ENCODE measurements at regions of chr14 and their contacts with region 1.

Region 1: GRCh38 chr14:54312140-54312801 is 84.5 kb upstream of the CDKN3 start:
- DNase-seq: peak; percentile 91 to 97
- H3K4me3 ChIP-seq: no peak overlapping the region; the same call in 1 of the 2 replicates
- H3K27ac ChIP-seq: peak overlapping the region; percentile 75
- H3K4me1 ChIP-seq: peaks cover 35% of the 10 kb centered on the region
- H3K27me3 ChIP-seq: no peaks in the 10 kb centered on the region
- CTCF ChIP-seq: no peak

Region 2: GRCh38 chr14:54267172-54267571 is 45.1 kb before region 1 on chr14:
- CTCF ChIA-PET with region 1: no interaction called
- POLR2A ChIA-PET with region 1: interaction called, 8 read pairs
- intact Hi-C with region 1: loop called (anchors 5 kb)
- DNase-seq: peak in 1 of 2 experiments; percentile 44
- H3K4me3 ChIP-seq: no peak overlapping the region
- H3K27ac ChIP-seq: no peak overlapping the region
- H3K4me1 ChIP-seq: no peaks in the 10 kb centered on the region
- H3K27me3 ChIP-seq: no peaks in the 10 kb centered on the region
- CTCF ChIP-seq: no peak

Region 3: GRCh38 chr14:54337314-54337713 is 25.0 kb after region 1 on chr14:
- CTCF ChIA-PET with region 1: no interaction called
- POLR2A ChIA-PET with region 1: no interaction called
- intact Hi-C with region 1: no loop called
- DNase-seq: no peak
- H3K4me3 ChIP-seq: no peak overlapping the region
- H3K27ac ChIP-seq: no peak overlapping the region
- H3K4me1 ChIP-seq: peaks cover 11% of the 10 kb centered on the region; the same call in 1 of the 2 replicates
- H3K27me3 ChIP-seq: no peaks in the 10 kb centered on the region
- CTCF ChIP-seq: no peak

Region 4: DNA sequence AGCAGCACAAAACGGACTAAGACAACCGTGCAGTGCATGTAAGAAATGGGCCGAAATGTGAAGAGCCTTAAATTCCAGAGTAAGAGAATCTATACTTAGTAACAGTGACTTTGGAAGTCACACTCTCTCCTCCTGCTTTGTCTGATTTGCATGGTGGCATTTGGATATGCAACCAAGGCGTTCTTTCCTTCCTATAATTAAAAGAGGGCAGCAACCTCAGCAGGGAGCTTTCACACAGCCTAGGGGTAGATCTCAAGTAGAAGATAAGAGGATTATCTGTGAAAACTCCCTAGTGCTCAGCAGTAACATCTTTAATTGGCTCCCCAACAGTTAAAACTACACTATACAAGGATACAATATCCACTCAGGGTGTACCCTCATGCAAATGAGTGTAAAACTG is 160.0 kb after region 1 on chr14:
- CTCF ChIA-PET with region 1: no interaction called
- POLR2A ChIA-PET with region 1: no interaction called
- intact Hi-C with region 1: no loop called
- DNase-seq: no peak
- H3K4me3 ChIP-seq: no peak overlapping the region
- H3K27ac ChIP-seq: no peak overlapping the region
- H3K4me1 ChIP-seq: no peaks in the 10 kb centered on the region
- H3K27me3 ChIP-seq: no peaks in the 10 kb centered on the region
- CTCF ChIP-seq: no peak